CD8-positive, alpha-beta T cell (primary cell): ENCODE measurements at regions of chr20 and their contacts with region 1.

Region 1: GRCh38 chr20:63178889-63179686 is 36.8 kb downstream of the YTHDF1 start:
- DNase-seq: peak; percentile 53 to 87 (median 77)
- ATAC-seq: peak; percentile 87
- H3K4me3 ChIP-seq: peak overlapping the region; percentile 34 to 52
- H3K4me3 Mint-ChIP-seq: peak overlapping the region; percentile 62
- H3K27ac ChIP-seq: no peak overlapping the region
- H3K27ac Mint-ChIP-seq: no peak overlapping the region
- H3K4me1 ChIP-seq: peaks cover 18% of the 10 kb centered on the region
- H3K4me1 Mint-ChIP-seq: peaks cover 12% of the 10 kb centered on the region
- H3K27me3 ChIP-seq: peaks cover 17 to 37% of the 10 kb centered on the region in 2 experiments
- H3K27me3 Mint-ChIP-seq: peaks cover 32% of the 10 kb centered on the region
- CTCF ChIP-seq: peak; percentile 60

Region 2: DNA sequence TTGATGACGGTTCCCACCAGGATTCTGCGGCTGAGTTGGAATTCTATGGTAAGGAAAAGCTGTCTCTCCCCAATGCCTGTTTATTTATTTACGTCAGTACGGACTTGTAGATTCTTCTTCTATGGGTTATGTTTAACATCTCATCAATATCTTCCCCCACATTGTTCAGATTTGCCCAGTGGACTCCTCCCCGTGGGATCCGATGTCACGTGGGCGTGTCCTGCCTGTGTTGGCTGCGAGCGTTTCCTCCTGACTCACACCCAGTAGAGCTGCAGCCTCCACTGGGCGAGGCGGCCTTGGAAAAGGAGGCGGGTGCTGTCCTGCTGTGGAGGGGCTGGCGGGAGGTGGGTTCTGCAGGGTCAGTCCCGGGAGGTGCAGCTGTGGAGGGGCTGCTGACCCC is 583.6 kb before region 1 on chr20:
- CTCF ChIA-PET with region 1: no interaction called
- POLR2A ChIA-PET with region 1: no interaction called
- intact Hi-C with region 1: no loop called
- DNase-seq: no peak
- ATAC-seq: no peak
- H3K4me3 ChIP-seq: no peak overlapping the region
- H3K4me3 Mint-ChIP-seq: no peak overlapping the region
- H3K27ac ChIP-seq: no peak overlapping the region
- H3K27ac Mint-ChIP-seq: no peak overlapping the region
- H3K4me1 ChIP-seq: no peaks in the 10 kb centered on the region
- H3K4me1 Mint-ChIP-seq: no peaks in the 10 kb centered on the region
- H3K27me3 ChIP-seq: peaks cover 4 to 21% of the 10 kb centered on the region in 2 experiments
- H3K27me3 Mint-ChIP-seq: peaks cover 34% of the 10 kb centered on the region
- CTCF ChIP-seq: no peak

Region 3: DNA sequence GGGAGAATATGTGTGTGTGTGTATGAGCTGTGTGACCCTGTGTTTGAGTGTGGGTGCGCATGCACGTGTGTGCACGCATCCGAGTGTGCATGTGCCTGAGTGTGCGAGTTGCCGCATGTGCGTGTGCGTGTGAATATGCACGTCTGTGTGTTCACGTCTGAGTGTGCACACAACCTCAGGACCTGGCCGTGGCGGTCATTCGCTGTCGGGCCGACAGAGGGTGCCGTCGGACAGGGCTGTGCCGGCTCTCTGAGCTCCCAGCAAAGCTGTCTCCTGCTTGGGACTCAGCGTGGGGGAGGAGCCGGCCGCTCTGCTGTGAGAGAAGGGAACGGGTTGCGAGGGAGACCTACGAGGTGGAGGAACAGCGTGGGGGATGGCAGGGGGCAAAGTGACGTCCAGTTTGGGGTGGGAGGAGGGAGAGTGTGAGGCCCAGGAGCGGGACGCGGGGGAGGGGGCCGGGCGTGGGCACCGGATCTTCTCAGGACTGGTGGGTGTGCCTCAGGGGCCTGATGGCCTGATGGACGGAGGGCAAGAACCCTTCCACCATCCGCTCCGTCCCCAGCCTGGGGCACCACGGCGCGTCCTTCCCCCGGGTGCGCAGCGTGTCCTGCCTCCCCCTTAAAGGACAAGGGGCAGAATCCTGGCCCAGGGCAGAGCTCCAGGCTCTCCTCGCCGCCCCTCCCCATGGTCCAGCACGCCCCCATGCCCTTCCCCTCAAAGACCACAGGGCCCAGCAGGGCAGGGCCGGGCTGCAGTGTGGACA is 206.6 kb before region 1 on chr20:
- CTCF ChIA-PET with region 1: interaction called, 5 read pairs
- POLR2A ChIA-PET with region 1: no interaction called
- intact Hi-C with region 1: loop called in 1 of 2 experiments (anchors 1 kb)
- DNase-seq: peak; percentile 75 to 88 (median 86)
- ATAC-seq: peak; percentile 99
- H3K4me3 ChIP-seq: peak overlapping the region in 1 of 2 experiments; percentile 36
- H3K4me3 Mint-ChIP-seq: peak overlapping the region; percentile 79
- H3K27ac ChIP-seq: no peak overlapping the region
- H3K27ac Mint-ChIP-seq: peak overlapping the region; percentile 42
- H3K4me1 ChIP-seq: peaks cover 18% of the 10 kb centered on the region
- H3K4me1 Mint-ChIP-seq: peaks cover 23% of the 10 kb centered on the region
- H3K27me3 ChIP-seq: peaks cover 16 to 48% of the 10 kb centered on the region in 2 experiments
- H3K27me3 Mint-ChIP-seq: peaks cover 45% of the 10 kb centered on the region
- CTCF ChIP-seq: peak; percentile 84

Region 4: DNA sequence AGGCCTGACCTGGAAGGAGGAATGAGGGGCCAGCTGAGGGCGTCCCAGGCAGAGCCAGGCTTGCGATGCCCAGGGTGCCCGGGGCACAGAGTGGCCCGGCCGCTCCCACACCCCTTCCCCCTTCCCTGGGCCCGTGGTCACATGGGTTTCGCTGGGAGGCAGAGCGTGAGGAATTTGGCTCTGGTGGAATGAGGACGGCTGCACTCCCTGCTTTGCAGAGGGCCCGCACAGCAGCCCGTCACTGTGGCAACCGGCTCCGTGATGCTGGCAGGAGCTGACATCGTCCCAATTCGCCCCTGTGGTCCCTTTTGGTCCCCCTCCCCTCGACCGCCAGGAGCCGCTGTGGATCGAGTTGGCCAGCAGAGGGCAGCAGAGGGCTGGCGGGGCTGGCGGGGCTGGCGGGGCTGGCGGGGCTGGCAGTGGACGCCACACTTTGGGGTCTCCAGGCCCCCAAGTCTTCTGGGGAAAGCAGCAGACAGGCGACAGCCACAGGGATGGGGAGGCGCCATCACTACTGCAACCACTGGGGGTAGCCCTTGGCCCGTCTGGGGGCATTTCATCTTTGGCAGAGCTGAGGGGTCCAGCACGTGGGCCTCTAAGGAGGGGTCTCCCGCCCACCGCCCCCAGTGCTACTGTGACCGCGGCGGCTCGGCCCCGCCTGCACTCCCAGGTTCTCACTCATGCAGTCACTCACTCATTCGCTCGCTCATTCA is 122.7 kb before region 1 on chr20:
- CTCF ChIA-PET with region 1: interaction called, 26 read pairs
- POLR2A ChIA-PET with region 1: no interaction called
- intact Hi-C with region 1: loop called in 1 of 2 experiments (anchors 1 kb)
- DNase-seq: peak in 8 of 9 experiments; percentile 12 to 60 (median 40)
- ATAC-seq: peak; percentile 71
- H3K4me3 ChIP-seq: no peak overlapping the region
- H3K4me3 Mint-ChIP-seq: no peak overlapping the region
- H3K27ac ChIP-seq: no peak overlapping the region
- H3K27ac Mint-ChIP-seq: no peak overlapping the region
- H3K4me1 ChIP-seq: no peaks in the 10 kb centered on the region
- H3K4me1 Mint-ChIP-seq: no peaks in the 10 kb centered on the region
- H3K27me3 ChIP-seq: peaks cover 2 to 3% of the 10 kb centered on the region in 2 experiments
- H3K27me3 Mint-ChIP-seq: peaks cover 11% of the 10 kb centered on the region
- CTCF ChIP-seq: peak; percentile 75

Region 5: DNA sequence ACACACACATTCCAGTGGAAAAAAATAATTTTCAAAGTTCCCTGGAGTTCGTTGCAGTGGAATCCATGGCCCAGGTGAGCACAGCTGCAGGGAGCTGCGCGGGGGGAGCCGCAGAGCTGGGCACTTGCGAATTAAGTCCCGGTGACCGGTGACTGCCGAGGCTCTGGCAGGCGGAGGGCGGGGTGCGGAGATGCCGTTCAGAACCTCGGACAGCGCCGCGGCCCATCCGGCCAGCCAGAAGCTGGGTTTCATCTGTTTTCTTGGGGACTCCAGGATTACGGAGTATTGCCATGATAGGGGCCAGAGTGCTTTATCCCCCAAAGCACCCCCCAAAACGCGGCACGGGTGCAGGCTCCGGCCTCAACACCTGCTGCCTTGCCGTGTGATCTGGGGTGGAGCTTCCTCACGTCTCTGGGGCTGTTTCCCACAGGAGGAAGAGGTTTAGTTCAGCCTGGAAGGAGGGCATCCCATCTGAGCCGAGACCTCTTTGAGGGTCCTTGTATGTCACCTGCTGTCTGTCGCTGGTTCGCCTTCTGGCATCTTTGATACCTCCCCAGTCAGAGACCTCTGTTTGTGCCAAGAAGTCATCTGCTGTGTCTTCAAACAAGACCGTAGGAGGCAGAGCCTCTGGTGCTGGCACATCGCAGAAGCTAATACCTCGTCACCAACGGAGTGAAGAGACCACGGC is 62.5 kb before region 1 on chr20:
- CTCF ChIA-PET with region 1: no interaction called
- POLR2A ChIA-PET with region 1: no interaction called
- intact Hi-C with region 1: no loop called
- DNase-seq: no peak
- ATAC-seq: no peak
- H3K4me3 ChIP-seq: no peak overlapping the region
- H3K4me3 Mint-ChIP-seq: no peak overlapping the region
- H3K27ac ChIP-seq: no peak overlapping the region
- H3K27ac Mint-ChIP-seq: no peak overlapping the region
- H3K4me1 ChIP-seq: no peaks in the 10 kb centered on the region
- H3K4me1 Mint-ChIP-seq: no peaks in the 10 kb centered on the region
- H3K27me3 ChIP-seq: peaks cover 0 to 6% of the 10 kb centered on the region in 2 experiments
- H3K27me3 Mint-ChIP-seq: peaks cover 35% of the 10 kb centered on the region
- CTCF ChIP-seq: no peak

Region 6: DNA sequence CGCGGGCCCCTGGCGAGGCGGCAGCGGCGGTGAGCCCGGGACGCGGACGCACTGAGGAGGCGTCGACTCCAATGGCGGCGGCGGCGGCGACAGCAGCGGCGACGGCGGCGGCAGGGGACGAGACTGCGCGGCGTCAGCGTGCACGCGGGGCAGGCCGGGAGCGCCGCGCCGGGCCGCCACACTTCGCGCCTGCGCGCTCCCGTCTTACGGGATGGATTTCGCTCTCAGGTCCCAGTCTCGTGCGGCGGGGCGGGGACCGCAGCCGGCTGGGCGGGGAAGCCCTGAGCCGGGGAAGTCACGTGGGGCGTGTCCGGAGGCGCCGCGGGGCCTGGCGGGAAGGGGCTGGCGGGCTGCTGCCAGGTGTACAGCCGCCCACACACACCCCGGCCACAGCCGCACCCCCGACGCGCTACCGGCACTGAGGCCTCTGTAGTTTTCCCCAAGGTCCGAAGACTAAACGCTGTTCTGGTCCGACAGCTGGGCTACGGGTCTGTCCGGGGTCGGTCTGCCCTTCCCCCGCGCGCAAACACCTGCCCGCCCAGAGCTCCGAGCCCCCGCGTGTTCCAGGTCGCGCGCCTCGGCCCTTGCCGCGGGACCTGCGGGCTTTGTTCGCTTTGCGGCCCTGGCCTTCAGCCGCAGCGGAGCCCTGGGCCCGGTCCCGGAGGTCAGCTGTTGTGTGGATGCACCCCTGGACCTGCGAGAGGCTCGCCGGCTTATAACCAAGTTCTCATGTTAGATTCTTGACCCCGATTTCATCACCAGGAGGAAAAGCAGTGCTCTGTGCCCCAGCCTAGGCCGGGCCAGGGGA is 37.2 kb after region 1 on chr20 and contains the start of gene YTHDF1:
- CTCF ChIA-PET with region 1: no interaction called
- POLR2A ChIA-PET with region 1: no interaction called
- intact Hi-C with region 1: loop called in 1 of 2 experiments (anchors 2 kb)
- DNase-seq: peak; percentile 86 to 98 (median 95)
- ATAC-seq: peak; percentile 96
- H3K4me3 ChIP-seq: peak within 1 kb of the TSS; percentile 68 to 84
- H3K4me3 Mint-ChIP-seq: peak within 1 kb of the TSS; percentile 91
- H3K27ac ChIP-seq: peak within 1 kb of the TSS; percentile 73 to 74
- H3K27ac Mint-ChIP-seq: peak within 1 kb of the TSS; percentile 94
- H3K4me1 ChIP-seq: peaks cover 44% of the 10 kb centered on the region
- H3K4me1 Mint-ChIP-seq: peaks cover 44% of the 10 kb centered on the region
- H3K27me3 ChIP-seq: no peaks in the 10 kb centered on the region
- H3K27me3 Mint-ChIP-seq: peaks cover 2% of the 10 kb centered on the region
- CTCF ChIP-seq: no peak
- total RNA-seq, gene YTHDF1: 44.8 to 45.7 TPM

Region 7: GRCh38 chr20:63381807-63382322 is 202.8 kb after region 1 on chr20:
- CTCF ChIA-PET with region 1: no interaction called
- POLR2A ChIA-PET with region 1: no interaction called
- intact Hi-C with region 1: loop called in 1 of 2 experiments (anchors 1 kb)
- DNase-seq: peak in 7 of 9 experiments; percentile 6 to 58 (median 46)
- ATAC-seq: peak; percentile 51
- H3K4me3 ChIP-seq: no peak overlapping the region
- H3K4me3 Mint-ChIP-seq: no peak overlapping the region
- H3K27ac ChIP-seq: no peak overlapping the region
- H3K27ac Mint-ChIP-seq: no peak overlapping the region
- H3K4me1 ChIP-seq: no peaks in the 10 kb centered on the region
- H3K4me1 Mint-ChIP-seq: peaks cover 3% of the 10 kb centered on the region
- H3K27me3 ChIP-seq: no peaks in the 10 kb centered on the region
- H3K27me3 Mint-ChIP-seq: peaks cover 14% of the 10 kb centered on the region
- CTCF ChIP-seq: peak; percentile 77